ENCODE measurements at regions of chr15 and their contacts with region 1.

Region 1: GRCh38 chr15:78108299-78109084 is 16.1 kb downstream of the SH2D7 start:
- DNase-seq: peak; percentile 82
- H3K4me3 ChIP-seq: no peak overlapping the region
- H3K27ac ChIP-seq: no peak overlapping the region
- H3K4me1 ChIP-seq: peaks cover 16% of the 10 kb centered on the region
- H3K27me3 ChIP-seq: no peaks in the 10 kb centered on the region
- CTCF ChIP-seq: peak; percentile 94 to 96
- POLR2A ChIP-seq: no peak

Region 2: DNA sequence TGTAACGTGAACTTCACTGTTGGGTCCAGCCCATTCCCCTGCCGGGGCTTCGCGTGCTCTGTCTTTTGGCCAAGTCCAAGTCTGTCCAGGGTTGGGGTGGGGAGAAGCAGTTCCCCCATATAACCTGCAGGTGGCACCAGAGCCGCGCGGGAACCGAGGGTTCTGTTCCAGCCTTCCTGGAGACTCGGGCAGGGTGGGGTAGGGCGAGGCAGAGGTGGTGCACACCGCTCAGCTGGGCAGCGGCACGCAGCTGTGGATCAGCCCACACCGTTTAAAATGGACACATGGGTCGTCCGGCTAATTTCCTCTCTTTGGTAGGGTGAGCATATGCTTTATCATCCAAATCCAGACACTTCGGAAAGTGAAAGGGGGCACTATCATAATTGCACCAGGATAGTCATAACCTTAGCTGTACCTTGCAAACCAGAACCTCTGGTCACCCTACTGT is 149.0 kb before region 1 on chr15:
- CTCF ChIA-PET with region 1: interaction called, 151 read pairs
- POLR2A ChIA-PET with region 1: no interaction called
- dilution Hi-C with region 1: no loop called
- intact Hi-C with region 1: loop called (anchors 1 kb)
- DNase-seq: peak; percentile 76
- H3K4me3 ChIP-seq: peak overlapping the region in 1 of 3 experiments; percentile 32
- H3K27ac ChIP-seq: no peak overlapping the region
- H3K4me1 ChIP-seq: no peaks in the 10 kb centered on the region
- H3K27me3 ChIP-seq: peaks cover 3 to 8% of the 10 kb centered on the region in 2 experiments
- CTCF ChIP-seq: peak; percentile 84 to 93
- POLR2A ChIP-seq: no peak

Region 3: GRCh38 chr15:78000091-78000926 is 108.2 kb before region 1 on chr15:
- CTCF ChIA-PET with region 1: interaction called, 273 read pairs
- POLR2A ChIA-PET with region 1: interaction called, 3 read pairs
- dilution Hi-C with region 1: no loop called
- intact Hi-C with region 1: loop called (anchors 1 kb)
- DNase-seq: peak; percentile 79
- H3K4me3 ChIP-seq: no peak overlapping the region
- H3K27ac ChIP-seq: no peak overlapping the region
- H3K4me1 ChIP-seq: no peaks in the 10 kb centered on the region
- H3K27me3 ChIP-seq: no peaks in the 10 kb centered on the region
- CTCF ChIP-seq: peak; percentile 83 to 88
- POLR2A ChIP-seq: no peak

Region 4: GRCh38 chr15:78040653-78041244 is 67.7 kb before region 1 on chr15:
- CTCF ChIA-PET with region 1: interaction called, 44 read pairs
- POLR2A ChIA-PET with region 1: no interaction called
- dilution Hi-C with region 1: no loop called
- intact Hi-C with region 1: loop called (anchors 1 kb)
- DNase-seq: no peak
- H3K4me3 ChIP-seq: no peak overlapping the region
- H3K27ac ChIP-seq: no peak overlapping the region
- H3K4me1 ChIP-seq: peaks cover 11% of the 10 kb centered on the region
- H3K27me3 ChIP-seq: no peaks in the 10 kb centered on the region
- CTCF ChIP-seq: no peak
- POLR2A ChIP-seq: no peak

Region 5: DNA sequence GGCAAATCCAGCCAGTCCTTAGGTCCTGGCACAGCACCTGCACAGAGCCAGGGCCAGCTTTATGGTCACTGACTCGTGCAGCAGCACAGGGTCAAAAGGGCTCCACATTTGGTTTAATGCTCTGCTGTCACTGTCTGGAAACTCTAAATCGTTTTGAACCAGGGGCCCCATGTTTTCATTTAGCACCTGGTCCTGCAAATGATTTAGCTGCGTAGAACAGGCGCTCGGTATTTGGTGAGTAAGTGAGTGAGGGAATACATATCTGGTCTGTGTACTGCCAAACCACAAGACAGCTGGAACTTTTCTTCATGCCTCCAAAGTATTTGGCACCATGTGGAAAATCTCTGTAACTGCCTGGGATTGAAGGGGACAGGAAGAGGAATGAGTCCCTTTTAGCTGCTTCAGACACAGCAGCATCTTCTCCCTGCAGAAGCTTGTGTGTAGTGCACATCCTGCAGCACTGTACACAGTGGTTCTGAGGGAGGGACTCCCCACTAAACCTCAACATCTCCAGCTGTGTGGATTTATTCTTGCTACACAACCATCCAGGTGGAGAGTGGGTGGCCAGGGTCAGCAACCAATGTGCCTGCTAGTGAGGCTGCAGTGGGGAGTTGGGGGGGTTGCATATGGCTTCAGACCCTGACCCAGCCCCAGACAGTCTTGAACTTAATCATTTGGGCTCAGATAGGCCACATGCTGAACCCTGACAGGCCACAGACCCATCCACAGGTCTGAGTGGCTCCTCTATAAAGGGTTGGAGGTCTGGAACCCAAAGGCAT is 15.1 kb before region 1 on chr15:
- CTCF ChIA-PET with region 1: interaction called, 38 read pairs
- POLR2A ChIA-PET with region 1: no interaction called
- dilution Hi-C with region 1: no loop called
- intact Hi-C with region 1: no loop called
- DNase-seq: no peak
- H3K4me3 ChIP-seq: no peak overlapping the region
- H3K27ac ChIP-seq: no peak overlapping the region
- H3K4me1 ChIP-seq: no peaks in the 10 kb centered on the region
- H3K27me3 ChIP-seq: peaks cover 10 to 14% of the 10 kb centered on the region in 2 experiments
- CTCF ChIP-seq: no peak
- POLR2A ChIP-seq: no peak

Region 6: DNA sequence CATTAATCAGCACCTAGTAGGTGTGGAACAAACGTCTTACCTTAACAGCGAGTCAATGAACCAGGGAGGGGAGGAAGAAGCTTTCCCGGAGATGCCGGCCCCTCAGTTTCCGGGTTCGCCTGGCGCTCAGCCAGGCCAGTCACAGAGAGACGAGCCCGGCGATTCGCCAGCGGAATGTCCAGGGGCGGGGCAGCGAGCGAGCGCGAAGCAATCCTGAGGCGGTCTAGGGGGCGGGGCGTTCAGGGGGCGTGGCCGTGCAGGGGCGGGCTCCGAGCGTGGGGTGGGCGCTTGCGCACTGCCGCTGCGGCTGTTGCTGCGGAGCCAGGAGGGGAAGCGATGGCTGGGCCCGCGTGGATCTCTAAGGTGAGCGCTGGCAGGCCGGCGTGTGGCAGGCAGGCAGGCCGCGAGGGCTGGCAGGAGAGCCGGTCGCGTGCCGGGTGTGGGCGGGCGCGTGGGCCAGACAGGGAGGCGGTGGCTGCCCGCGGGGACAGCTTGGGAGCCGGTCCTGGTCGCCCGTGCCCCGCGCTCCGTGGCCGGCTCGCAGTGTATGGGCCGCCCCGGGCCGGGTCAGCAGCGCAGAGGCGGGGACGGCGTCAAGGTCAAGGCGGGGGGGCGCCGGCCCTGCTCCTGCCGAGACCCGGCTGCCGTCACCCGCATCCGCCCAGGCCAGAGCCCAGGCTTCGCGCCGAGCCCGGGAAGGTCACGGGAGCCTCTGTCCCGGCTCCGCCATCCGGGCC is 40.7 kb after region 1 on chr15 and contains the start of gene IDH3A:
- CTCF ChIA-PET with region 1: interaction called, 13 read pairs
- POLR2A ChIA-PET with region 1: no interaction called
- dilution Hi-C with region 1: no loop called
- intact Hi-C with region 1: no loop called
- DNase-seq: peak; percentile 95
- H3K4me3 ChIP-seq: peak within 1 kb of the TSS; percentile 54 to 94 (median 71)
- H3K27ac ChIP-seq: peak within 1 kb of the TSS; percentile 81
- H3K4me1 ChIP-seq: peaks cover 11% of the 10 kb centered on the region
- H3K27me3 ChIP-seq: no peaks in the 10 kb centered on the region
- CTCF ChIP-seq: no peak
- POLR2A ChIP-seq: peak; percentile 64
- total RNA-seq, gene IDH3A: 62.8 and 63.9 TPM in 2 replicates

Measured in endothelial cell of umbilical vein (primary cell).